Ovary (tissue), 10 donors: ENCODE measurements at regions of chr3 and their contacts with region 1.

Region 1: GRCh38 chr3:43260412-43260811 is 25.9 kb upstream of the SNRK start:
- DNase-seq: no peak
- H3K4me3 ChIP-seq: no peak overlapping the region
- H3K27ac ChIP-seq: no peak overlapping the region
- H3K4me1 ChIP-seq: no peaks in the 10 kb centered on the region
- H3K27me3 ChIP-seq: no peaks in the 10 kb centered on the region
- CTCF ChIP-seq: no peak
- EP300 ChIP-seq: no peak
- POLR2A ChIP-seq: no peak

Region 2: DNA sequence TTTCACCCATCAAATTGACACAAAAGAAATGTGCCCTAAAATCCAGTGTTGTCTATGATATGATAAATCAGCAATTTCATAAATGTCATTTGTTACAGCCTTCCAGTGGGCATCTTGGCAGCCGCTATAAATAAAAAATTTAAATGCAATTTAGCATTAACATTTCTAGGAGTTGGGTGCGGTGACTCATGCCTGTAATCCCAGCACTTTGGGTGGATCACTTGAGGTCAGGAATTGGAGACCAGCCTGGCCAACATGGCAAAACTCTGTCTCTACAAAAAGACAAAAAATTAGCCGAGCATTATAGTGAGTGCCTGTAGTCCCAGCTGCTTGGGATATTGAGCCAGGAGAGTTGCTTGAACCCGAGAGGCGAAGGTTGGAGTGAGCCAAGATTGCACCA is 88.6 kb before region 1 on chr3:
- intact Hi-C with region 1: loop called in 1 of 4 experiments (anchors 5 kb)
- DNase-seq: no peak
- H3K4me3 ChIP-seq: no peak overlapping the region
- H3K27ac ChIP-seq: no peak overlapping the region
- H3K4me1 ChIP-seq: no peaks in the 10 kb centered on the region
- H3K27me3 ChIP-seq: no peaks in the 10 kb centered on the region
- CTCF ChIP-seq: no peak
- EP300 ChIP-seq: no peak
- POLR2A ChIP-seq: no peak

Region 3: GRCh38 chr3:43432462-43432861 is 172.1 kb after region 1 on chr3:
- intact Hi-C with region 1: no loop called
- DNase-seq: no peak
- H3K4me3 ChIP-seq: no peak overlapping the region
- H3K27ac ChIP-seq: no peak overlapping the region
- H3K4me1 ChIP-seq: no peaks in the 10 kb centered on the region
- H3K27me3 ChIP-seq: no peaks in the 10 kb centered on the region
- CTCF ChIP-seq: no peak
- EP300 ChIP-seq: no peak
- POLR2A ChIP-seq: no peak